ENCODE measurements at regions of chr17 and their contacts with region 1.

Region 1: DNA sequence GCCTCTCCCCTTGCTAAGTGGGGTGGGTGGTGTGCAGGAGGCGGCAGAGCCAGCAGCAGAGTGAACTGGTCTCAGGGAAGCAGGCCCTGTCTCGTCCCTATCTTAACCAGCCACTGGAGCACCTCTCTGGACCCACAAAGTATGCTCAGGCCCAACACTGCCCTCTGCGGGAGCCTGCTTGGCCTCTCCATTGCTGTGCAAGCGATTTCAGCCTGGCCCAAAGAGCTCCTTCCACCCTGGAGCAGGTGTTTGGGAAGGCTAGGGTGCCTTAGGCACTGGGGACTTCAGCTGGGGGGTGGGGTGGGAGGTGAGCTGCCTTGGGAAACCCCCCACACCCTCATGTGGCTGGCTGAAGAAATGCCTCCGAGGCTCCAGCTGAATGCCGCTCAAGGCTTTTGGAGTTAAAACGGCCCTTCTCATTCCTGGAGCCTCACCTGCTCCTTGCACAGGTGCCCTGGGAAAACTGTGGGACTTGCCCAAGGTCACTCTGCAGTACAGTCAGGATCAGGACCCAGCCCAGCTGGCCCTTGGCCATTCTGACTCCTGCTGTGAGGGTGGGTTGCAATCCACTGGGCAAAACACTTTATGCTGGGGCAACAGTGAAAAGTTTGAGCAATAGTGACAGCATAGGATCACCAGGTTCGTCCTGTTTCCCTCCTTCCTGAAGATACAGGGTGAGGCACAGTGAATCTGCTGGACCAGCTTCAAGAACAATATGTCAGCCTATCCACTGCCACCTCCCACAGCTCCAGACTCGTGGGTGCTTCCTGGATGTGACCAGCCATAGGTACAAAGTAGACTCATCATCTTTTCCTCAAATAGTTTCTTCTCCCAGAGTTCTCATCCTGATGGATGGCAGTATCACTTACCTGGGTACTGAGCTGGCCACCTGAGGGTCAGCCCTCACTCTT is 5.9 kb upstream of the UBE2O start:
- DNase-seq: peak; percentile 88
- H3K4me3 ChIP-seq: no peak overlapping the region
- H3K27ac ChIP-seq: no peak overlapping the region
- H3K4me1 ChIP-seq: peaks cover 17% of the 10 kb centered on the region
- CTCF ChIP-seq: peak; percentile 95

Region 2: DNA sequence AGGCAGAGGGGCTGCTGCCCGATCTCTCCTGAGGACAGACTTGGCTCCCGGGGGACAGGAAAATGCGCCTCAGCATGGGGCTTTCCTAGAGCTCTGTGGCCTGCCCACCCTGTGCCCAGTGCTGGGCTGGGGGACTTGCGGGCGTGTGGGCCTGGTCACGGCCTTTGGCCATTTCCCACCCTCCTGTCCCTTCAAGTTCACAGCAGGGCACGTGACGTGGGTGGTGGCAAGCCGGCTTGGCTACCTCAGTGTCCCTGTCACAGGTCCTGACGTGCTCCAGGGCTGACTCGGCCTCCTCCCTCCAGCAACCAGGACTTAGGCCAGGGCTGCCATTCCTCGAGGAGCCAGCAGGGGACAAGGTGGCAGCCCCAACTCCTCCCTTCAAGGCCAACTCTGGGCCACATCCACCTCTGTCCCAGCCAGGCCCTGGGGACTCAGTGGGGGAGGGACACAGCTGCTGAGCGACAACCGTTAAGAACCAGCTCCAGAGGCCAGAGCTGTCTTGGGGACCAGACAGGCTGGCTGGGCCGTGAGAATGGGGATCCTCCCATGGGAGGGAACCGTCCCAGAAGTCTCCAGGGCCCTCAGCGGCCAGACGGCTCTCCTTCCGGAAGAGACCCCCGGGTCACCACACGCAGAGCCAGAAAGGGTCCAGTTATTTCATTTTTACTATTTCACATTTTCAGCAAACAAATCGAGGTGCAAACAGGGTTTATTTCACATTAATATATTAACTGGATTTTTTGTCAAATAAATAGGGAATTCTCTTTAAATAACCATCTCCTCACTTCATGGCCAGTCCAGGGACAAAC is 613.6 kb before region 1 on chr17:
- CTCF ChIA-PET with region 1: no interaction called
- POLR2A ChIA-PET with region 1: no interaction called
- intact Hi-C with region 1: no loop called
- DNase-seq: peak; percentile 82
- H3K4me3 ChIP-seq: no peak overlapping the region
- H3K27ac ChIP-seq: no peak overlapping the region
- H3K4me1 ChIP-seq: peaks cover 24% of the 10 kb centered on the region
- CTCF ChIP-seq: peak; percentile 82

Region 3: DNA sequence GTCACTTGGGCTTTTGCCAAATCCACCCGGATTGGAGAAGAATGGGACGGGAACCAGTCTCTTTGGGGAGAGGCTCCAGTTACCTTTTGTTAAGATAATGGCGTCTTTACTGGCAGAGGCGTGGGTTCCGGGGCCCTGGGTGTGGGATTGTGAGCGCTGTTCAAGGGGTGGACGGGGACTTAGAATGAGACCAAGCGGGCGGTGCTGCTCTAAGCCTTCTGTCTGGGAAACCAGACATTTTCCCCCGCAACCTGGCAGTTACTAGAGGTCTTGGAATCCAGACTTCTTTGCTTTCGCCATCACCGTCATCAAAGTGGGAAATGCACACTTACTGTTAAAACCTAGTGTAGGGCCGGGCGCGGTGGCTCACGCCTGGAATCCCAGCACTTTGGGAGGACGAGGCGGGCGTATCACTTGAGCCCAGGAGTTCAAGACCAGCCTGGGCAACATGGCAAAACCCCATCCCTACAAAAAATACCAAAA is 479.1 kb before region 1 on chr17:
- CTCF ChIA-PET with region 1: no interaction called
- POLR2A ChIA-PET with region 1: no interaction called
- intact Hi-C with region 1: no loop called
- DNase-seq: no peak
- H3K4me3 ChIP-seq: peak overlapping the region; percentile 79
- H3K27ac ChIP-seq: peak overlapping the region; percentile 69
- H3K4me1 ChIP-seq: peaks cover 52% of the 10 kb centered on the region
- CTCF ChIP-seq: no peak

Region 4: DNA sequence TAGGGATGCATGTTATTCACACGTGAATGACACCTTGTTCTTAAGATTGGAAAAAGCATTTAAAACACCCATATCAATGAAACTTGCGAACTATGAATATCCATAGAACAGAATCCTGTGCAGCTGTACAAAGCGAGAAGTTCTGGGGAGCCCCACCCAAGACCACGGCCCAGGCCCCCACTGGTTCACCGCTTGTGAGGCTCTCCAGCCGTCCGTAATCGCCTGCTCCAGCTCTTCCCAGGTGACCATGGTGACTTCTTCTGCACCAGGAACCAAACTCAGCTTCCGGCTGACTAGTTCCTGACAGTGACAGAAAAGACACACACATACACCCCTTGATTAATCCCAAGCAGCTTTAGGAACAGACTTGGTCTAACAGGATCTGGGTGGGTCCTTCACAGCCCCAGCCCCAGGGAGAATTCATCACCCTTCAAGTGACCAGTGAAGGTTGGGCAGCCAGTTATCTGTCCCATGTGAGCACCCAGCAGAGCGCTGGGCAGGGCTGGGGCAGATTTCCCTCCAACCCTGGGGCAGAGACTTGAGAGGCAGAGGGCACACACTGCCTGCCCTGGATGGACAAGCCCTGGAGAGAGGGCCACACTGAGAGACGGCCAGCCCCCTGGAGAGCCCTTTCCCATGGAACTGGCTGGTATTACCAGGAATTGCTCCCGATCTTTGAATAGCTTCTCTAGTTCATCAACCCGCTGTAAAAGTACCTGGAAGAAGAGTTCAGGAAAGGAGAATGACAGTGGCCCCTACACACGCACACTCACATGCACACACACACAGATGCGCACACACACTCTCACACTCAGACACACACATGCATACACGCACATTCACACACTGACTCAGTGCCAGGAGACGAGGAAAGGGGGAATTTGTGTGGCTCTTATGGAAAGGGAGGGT is 154.4 kb before region 1 on chr17:
- CTCF ChIA-PET with region 1: no interaction called
- POLR2A ChIA-PET with region 1: interaction called, 3 read pairs
- intact Hi-C with region 1: loop called (anchors 5 kb)
- DNase-seq: no peak
- H3K4me3 ChIP-seq: no peak overlapping the region
- H3K27ac ChIP-seq: no peak overlapping the region
- H3K4me1 ChIP-seq: peaks cover 5% of the 10 kb centered on the region
- CTCF ChIP-seq: no peak

Region 5: DNA sequence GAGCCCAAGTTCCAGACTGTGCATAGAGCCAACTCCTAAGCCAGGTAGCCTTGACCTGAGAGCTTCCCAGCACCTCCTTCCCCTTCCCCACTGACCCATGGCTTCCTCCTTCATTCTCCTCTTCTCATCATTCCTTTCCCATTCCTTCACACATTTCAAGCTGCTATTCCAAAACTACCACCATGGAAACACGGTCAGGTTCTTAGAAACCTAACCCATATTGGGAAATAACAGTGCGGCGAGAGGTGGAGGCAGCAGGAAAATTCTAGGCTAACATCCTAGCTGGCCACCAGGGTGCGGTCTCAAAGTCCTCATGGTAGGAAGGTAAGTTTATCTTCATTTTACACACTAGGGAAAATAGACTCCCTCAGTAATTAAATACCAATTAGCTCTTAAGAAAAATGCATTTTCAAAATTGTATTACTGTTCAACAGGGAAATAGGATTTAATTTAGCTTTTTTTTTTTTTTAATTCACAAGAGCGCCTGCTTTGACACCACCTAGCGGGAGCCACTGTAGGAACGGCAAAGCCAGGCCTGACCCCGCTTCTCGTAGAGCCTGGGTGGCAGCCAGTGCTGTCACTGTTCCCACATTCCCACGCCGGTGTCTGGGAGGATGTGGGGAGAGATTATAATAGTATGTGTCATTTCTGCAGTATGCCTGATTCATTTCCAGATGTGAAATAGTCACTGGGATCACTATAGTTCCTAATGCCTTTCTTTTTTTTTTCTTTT is 88.4 kb before region 1 on chr17:
- CTCF ChIA-PET with region 1: no interaction called
- POLR2A ChIA-PET with region 1: no interaction called
- intact Hi-C with region 1: no loop called
- DNase-seq: peak; percentile 52
- H3K4me3 ChIP-seq: no peak overlapping the region
- H3K27ac ChIP-seq: no peak overlapping the region
- H3K4me1 ChIP-seq: no peaks in the 10 kb centered on the region
- CTCF ChIP-seq: peak; percentile 99

Region 6: GRCh38 chr17:76408052-76408849 is 50.6 kb before region 1 on chr17:
- CTCF ChIA-PET with region 1: interaction called, 33 read pairs
- POLR2A ChIA-PET with region 1: interaction called, 12 read pairs
- intact Hi-C with region 1: loop called (anchors 1 kb)
- DNase-seq: peak; percentile 89
- H3K4me3 ChIP-seq: no peak overlapping the region
- H3K27ac ChIP-seq: peak overlapping the region; percentile 1
- H3K4me1 ChIP-seq: peaks cover 48% of the 10 kb centered on the region
- CTCF ChIP-seq: peak; percentile 100

Region 7: DNA sequence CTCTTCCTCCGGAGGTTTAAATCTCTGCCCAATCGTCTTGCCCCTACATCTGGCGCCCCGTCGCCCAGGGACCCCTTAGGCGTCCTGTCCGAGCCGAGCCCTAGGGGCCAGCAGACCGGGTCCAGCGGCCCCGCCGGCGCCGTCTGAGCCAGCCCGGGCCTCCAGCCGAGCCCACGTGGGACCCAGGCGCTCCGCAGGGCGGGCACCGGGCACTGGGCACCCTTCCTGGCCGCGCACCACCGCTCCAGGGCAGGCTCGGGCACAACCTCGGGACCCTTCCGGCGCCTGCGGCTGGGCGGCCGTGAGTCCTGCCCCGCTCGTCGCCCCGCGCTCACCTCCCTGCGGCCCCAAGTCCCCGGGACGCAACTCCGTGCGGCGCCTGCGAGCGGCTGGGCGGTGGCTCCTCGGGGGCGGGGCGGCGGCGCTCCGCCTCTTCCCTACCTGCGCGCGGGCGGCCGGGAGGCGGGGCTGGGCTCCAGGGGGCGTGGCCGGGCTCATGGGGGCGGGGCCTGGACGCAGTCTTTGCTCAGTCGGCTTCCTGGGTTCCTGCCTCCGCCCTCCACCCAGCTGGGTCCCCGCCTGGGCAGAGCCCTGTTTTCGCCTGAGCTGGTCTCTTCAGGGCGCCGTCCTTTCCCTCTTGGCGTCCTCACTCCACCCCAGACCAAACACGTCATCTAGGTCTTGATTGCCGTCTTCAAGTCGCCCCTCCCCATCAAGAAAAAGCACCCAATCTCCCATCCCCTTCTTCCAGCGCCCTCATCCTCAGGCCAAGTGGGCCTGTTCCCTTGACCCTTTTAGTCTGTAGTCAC is 42.4 kb after region 1 on chr17 and contains the start of gene RHBDF2:
- CTCF ChIA-PET with region 1: interaction called, 28 read pairs
- POLR2A ChIA-PET with region 1: interaction called, 13 read pairs
- intact Hi-C with region 1: loop called (anchors 1 kb)
- DNase-seq: peak; percentile 94
- H3K4me3 ChIP-seq: peak within 1 kb of the TSS; percentile 96
- H3K27ac ChIP-seq: peak within 1 kb of the TSS; percentile 83
- H3K4me1 ChIP-seq: peaks cover 77% of the 10 kb centered on the region
- CTCF ChIP-seq: no peak
- total RNA-seq, gene RHBDF2: 122 and 144 TPM in 2 replicates

Region 8: GRCh38 chr17:76519048-76519966 is 60.5 kb after region 1 on chr17:
- CTCF ChIA-PET with region 1: no interaction called
- POLR2A ChIA-PET with region 1: no interaction called
- intact Hi-C with region 1: no loop called
- DNase-seq: no peak
- H3K4me3 ChIP-seq: no peak overlapping the region
- H3K27ac ChIP-seq: no peak overlapping the region
- H3K4me1 ChIP-seq: peaks cover 19% of the 10 kb centered on the region
- CTCF ChIP-seq: no peak

Measured in OCI-LY7 (cell line).